A549 (cell line): ENCODE measurements at regions of chr12 and their contacts with region 1.

Region 1: GRCh38 chr12:6195665-6196535 is 4.3 kb upstream of the CD9 start:
- DNase-seq: peak; percentile 87 to 98
- ATAC-seq: peak; percentile 76 to 92
- H3K4me3 ChIP-seq: no peak overlapping the region
- H3K27ac ChIP-seq: peak overlapping the region; percentile 53 to 76
- H3K4me1 ChIP-seq: peaks cover 14% of the 10 kb centered on the region
- CTCF ChIP-seq: peak; percentile 89
- EP300 ChIP-seq: no peak
- POLR2A ChIP-seq: no peak; the same call in 1 of the 2 replicates
- RAD21 ChIP-seq: peak; percentile 93 to 96

Region 2: DNA sequence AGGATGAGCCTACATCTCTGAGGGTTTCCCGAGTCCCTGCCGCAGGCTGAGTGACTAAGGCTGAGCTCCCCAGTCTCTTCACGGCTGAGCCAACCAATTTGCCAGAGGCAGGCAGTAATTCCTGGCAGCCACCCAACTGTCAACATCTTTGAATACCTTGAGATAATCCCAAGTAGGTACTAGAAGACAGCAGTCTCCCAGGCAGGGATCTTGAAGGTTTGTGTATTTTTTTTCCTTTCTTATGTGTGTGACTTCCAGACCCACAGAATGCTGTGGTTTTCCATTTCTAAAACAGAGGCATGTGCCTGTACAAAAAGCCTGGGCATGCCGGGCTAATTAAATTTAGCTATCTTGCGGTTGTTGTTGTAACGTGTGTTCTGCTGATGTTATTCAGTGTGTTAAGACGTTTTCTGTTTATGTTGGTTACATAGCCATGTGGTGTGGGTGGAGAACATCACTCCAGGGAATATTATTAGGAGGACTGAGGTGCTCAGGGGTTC is 406.4 kb before region 1 on chr12:
- CTCF ChIA-PET with region 1: no interaction called
- POLR2A ChIA-PET with region 1: no interaction called
- DNase-seq: no peak
- ATAC-seq: no peak
- H3K4me3 ChIP-seq: no peak overlapping the region
- H3K27ac ChIP-seq: no peak overlapping the region
- H3K4me1 ChIP-seq: no peaks in the 10 kb centered on the region
- CTCF ChIP-seq: no peak
- EP300 ChIP-seq: no peak
- POLR2A ChIP-seq: no peak
- RAD21 ChIP-seq: no peak

Region 3: GRCh38 chr12:6056406-6057240 is 139.3 kb before region 1 on chr12:
- CTCF ChIA-PET with region 1: interaction called, 13 read pairs
- POLR2A ChIA-PET with region 1: no interaction called
- DNase-seq: peak in 1 of 2 experiments; percentile 39
- ATAC-seq: peak in 1 of 2 experiments; percentile 78; a peak in 3 of 6 replicates
- H3K4me3 ChIP-seq: no peak overlapping the region
- H3K27ac ChIP-seq: no peak overlapping the region
- H3K4me1 ChIP-seq: no peaks in the 10 kb centered on the region
- CTCF ChIP-seq: no peak; the same call in 2 of the 3 replicates
- EP300 ChIP-seq: no peak
- POLR2A ChIP-seq: no peak
- RAD21 ChIP-seq: 0 out of 5 replicates have a peak, but pooled peaks of 1 of the 2 experiments have one; percentile 12

Region 4: DNA sequence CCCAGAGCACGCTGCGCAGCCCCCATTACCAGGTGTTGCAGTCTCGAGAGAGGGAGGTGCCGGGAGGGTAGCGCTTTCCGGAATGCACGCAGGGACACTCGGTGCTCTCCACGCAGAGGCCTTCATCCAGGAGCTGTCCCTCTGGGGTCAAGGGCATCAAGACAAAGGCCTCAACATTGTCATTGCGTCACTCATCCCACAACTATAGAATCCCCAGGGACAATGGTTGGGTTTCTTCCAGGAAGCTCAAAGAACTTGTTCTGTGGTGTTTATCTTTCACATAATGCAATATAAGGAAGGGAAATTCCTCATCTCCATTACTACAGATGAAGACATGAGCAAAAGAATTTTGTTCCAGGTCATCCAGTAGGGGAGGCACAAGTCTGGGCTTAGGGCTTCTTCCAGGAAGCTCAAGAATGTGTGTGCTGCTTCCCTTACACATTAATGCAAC is 123.6 kb before region 1 on chr12:
- CTCF ChIA-PET with region 1: interaction called, 24 read pairs
- POLR2A ChIA-PET with region 1: no interaction called
- DNase-seq: peak in 1 of 2 experiments; percentile 66
- ATAC-seq: peak in 1 of 2 experiments; percentile 48; a peak in 3 of 6 replicates
- H3K4me3 ChIP-seq: no peak overlapping the region
- H3K27ac ChIP-seq: no peak overlapping the region
- H3K4me1 ChIP-seq: 0 out of 3 replicates have a peak, but pooled peaks cover 4% of the 10 kb centered on the region
- CTCF ChIP-seq: no peak
- EP300 ChIP-seq: no peak
- POLR2A ChIP-seq: no peak
- RAD21 ChIP-seq: peak in 1 of 2 experiments; percentile 15; a peak in 1 of 5 replicates

Region 5: DNA sequence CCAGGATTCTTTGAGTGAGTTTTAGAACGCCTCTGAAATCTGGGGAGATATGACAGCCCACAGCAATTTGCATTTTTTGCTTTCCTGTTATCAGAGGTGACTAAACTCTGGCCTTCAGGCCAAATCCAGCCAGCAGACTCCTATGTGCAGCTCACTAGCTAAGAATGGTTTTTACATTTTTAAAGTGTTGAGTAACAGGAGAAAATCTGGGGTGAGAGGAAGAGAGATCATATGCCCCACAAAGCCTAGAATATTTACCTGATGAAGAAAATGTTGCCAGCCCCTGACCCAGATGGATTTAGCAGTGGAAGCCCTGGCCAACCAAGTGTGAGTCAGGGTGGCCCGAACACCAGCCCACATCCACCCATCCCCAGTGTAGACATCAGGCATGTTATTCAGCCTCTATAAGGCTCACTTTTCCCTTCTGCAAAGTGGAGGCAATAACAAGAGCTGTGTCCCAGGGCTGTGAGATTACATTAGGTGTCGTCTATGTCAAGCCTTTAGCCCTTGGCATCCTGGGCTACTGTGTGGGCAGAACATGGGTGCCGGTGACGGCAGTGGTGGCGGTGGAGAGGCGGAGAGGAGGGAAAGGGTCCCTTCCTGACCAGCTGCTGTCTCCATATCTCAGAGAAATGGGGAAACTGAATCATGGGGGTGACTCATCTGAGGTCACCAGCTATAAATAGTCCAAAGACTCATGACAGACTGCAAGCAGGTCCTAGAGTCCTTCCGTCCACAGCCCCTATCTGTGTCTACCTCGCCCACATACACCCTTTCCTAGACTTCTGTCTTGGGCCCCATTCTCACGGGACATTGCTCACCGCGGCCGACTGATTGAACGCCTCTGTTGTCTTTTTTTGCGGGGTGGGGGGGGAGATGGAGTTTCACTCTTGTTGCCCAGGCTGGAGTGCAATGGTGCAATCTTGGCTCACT is 28.3 kb before region 1 on chr12:
- CTCF ChIA-PET with region 1: interaction called, 14 read pairs
- POLR2A ChIA-PET with region 1: no interaction called
- DNase-seq: peak; percentile 44 to 61
- ATAC-seq: peak; percentile 89 to 92
- H3K4me3 ChIP-seq: no peak overlapping the region
- H3K27ac ChIP-seq: peak overlapping the region; percentile 36 to 79; a peak in 5 of 6 replicates
- H3K4me1 ChIP-seq: peaks cover 16% of the 10 kb centered on the region
- CTCF ChIP-seq: no peak
- EP300 ChIP-seq: no peak
- POLR2A ChIP-seq: no peak
- RAD21 ChIP-seq: no peak

Region 6: DNA sequence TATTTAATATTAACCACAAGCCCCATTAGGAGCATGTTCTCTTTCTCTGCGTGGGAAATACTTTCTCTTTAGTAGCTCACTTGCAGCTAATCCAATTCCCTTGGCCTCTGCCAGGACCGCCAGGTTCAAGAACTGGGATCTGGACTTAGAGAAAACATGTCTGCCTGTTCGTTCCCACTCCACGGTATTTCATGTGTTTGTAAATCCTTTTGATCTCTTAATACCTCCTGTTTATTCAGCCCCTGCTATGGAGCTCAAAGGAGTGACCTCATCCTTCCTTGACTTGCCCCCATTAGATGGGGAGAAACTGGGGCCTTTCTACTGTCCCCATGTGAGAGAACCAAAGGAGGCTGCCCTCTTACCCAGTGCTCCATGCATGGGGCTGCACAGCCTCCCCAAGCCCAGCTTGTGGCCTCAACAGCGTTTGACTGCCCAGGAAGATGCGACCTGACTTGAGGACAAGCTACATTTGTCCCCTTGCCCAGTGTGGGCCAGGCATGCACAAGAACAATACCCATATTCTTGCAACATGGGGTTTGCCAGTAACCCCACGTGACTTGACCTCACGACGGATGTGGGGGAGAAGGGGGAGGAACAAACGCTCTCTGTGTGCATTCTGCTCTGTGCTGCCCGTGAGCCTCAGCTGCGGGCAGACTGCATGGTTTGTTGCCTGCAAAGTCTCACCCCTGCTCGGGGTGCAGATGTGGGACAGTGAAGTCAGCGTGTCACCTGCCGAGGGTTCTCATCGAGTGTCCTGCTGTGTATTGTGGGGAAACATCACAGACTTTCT is 34.6 kb after region 1 on chr12:
- CTCF ChIA-PET with region 1: interaction called, 27 read pairs
- POLR2A ChIA-PET with region 1: interaction called, 3 read pairs
- DNase-seq: no peak
- ATAC-seq: no peak
- H3K4me3 ChIP-seq: no peak overlapping the region
- H3K27ac ChIP-seq: no peak overlapping the region
- H3K4me1 ChIP-seq: peaks cover 9% of the 10 kb centered on the region; the same call in 2 of the 3 replicates
- CTCF ChIP-seq: no peak
- EP300 ChIP-seq: no peak
- POLR2A ChIP-seq: no peak
- RAD21 ChIP-seq: no peak

Region 7: DNA sequence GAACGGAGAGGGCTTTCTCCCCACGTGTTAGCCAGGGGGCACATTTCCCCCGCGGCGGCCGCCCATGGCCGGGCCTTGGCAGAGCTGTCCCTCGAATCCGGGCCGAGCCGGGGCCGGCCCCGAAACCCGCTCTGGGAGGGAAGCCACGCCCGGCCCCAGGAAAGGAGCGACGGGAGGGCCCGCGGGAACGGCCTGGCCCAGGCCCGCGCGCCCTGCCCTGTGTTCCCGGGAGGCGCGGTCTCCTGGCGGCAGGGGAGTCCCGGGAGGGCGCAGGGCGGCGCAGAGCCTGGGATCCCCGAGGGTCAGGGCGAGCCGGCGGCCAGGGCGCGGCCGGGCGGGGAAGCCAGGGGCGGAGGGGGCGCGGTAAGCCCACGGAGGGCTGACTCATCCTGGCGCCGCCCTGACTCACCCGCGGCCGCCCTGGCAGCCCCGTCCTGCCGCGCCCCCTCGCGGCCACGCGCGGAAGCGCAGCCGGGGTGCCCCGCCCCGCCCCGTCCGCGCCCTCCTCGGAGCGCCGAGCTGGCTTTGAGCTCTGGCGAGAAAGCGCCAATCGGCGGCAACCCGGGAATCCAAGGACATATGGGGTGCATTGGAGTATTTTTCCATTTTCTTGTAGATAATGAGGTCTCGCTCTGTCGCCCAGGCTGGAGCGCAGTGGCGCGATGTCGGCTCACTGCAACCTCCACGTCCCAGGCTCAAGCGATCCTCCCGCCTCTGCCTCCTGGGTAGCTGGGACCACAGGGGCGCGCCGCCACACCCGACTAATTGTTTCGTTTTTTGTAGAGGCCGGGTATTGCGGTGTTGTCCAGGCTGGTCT is 82.7 kb after region 1 on chr12:
- CTCF ChIA-PET with region 1: interaction called, 529 read pairs
- POLR2A ChIA-PET with region 1: interaction called, 9 read pairs
- DNase-seq: peak; percentile 71 to 88
- ATAC-seq: peak; percentile 81 to 87
- H3K4me3 ChIP-seq: peak overlapping the region; percentile 50
- H3K27ac ChIP-seq: peak overlapping the region; percentile 97
- H3K4me1 ChIP-seq: peaks cover 40% of the 10 kb centered on the region
- CTCF ChIP-seq: peak; percentile 94
- EP300 ChIP-seq: no peak; a peak in 1 of 5 replicates
- POLR2A ChIP-seq: peak; percentile 45
- RAD21 ChIP-seq: peak; percentile 63 to 95

Region 8: GRCh38 chr12:6295094-6295811 is 99.4 kb after region 1 on chr12:
- CTCF ChIA-PET with region 1: interaction called, 11 read pairs
- POLR2A ChIA-PET with region 1: no interaction called
- DNase-seq: peak; percentile 93 to 97
- ATAC-seq: peak; percentile 92 to 94
- H3K4me3 ChIP-seq: no peak overlapping the region
- H3K27ac ChIP-seq: peak overlapping the region; percentile 75 to 85
- H3K4me1 ChIP-seq: peaks cover 40% of the 10 kb centered on the region
- CTCF ChIP-seq: no peak
- EP300 ChIP-seq: no peak
- POLR2A ChIP-seq: no peak
- RAD21 ChIP-seq: no peak